Lower leg skin (tissue), 4 donors: ENCODE measurements at regions of chr2 and their contacts with region 1.

Region 1: GRCh38 chr2:39913648-39914461 is 134.8 kb upstream of the THUMPD2 start:
- DNase-seq: no peak
- H3K4me3 ChIP-seq: no peak overlapping the region
- CTCF ChIP-seq: no peak
- POLR2A ChIP-seq: no peak

Region 2: GRCh38 chr2:40564184-40564583 is 650.3 kb after region 1 on chr2:
- intact Hi-C with region 1: loop called (anchors 10 kb)
- DNase-seq: no peak
- H3K4me3 ChIP-seq: no peak overlapping the region
- CTCF ChIP-seq: no peak
- POLR2A ChIP-seq: no peak

Region 3: GRCh38 chr2:41782306-41783158 is 1868.7 kb after region 1 on chr2:
- intact Hi-C with region 1: loop called (anchors 10 kb)
- DNase-seq: no peak
- H3K4me3 ChIP-seq: no peak overlapping the region
- CTCF ChIP-seq: no peak
- POLR2A ChIP-seq: no peak